Caco-2 (cell line): ENCODE measurements at regions of chr11 and their contacts with region 1.

Region 1: DNA sequence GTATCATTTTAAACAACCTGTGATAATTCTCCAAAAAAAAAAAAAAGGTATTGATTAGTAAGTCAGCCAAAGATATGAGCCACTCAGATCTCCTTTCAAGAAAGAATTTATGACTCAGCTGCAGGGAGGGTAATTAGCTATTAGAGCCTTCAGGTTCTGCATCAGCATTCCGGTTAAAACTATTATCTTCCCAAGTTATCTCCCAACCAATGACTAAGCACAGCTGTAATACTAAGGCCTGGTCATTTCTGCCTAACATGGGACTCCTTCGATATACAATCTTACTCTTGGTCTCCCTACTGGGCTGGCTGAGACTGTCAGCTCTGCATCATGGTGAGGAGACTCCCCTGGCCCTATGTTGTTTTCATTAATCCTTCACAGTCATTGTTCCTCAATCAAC is 60.4 kb downstream of the SBF2 start:
- DNase-seq: peak in 1 of 2 experiments; percentile 28
- H3K4me3 ChIP-seq: no peak overlapping the region
- H3K4me3 Mint-ChIP-seq: no peak overlapping the region
- H3K27ac Mint-ChIP-seq: peak overlapping the region; percentile 24
- H3K4me1 ChIP-seq: peaks cover 20% of the 10 kb centered on the region; the same call in 1 of the 2 replicates
- H3K4me1 Mint-ChIP-seq: peaks cover 6% of the 10 kb centered on the region
- H3K27me3 ChIP-seq: no peaks in the 10 kb centered on the region
- H3K27me3 Mint-ChIP-seq: no peaks in the 10 kb centered on the region
- CTCF ChIP-seq: no peak

Region 2: GRCh38 chr11:10155793-10156490 is 77.6 kb before region 1 on chr11:
- CTCF ChIA-PET with region 1: no interaction called
- POLR2A ChIA-PET with region 1: no interaction called
- intact Hi-C with region 1: loop called (anchors 5 kb)
- DNase-seq: no peak
- H3K4me3 ChIP-seq: no peak overlapping the region
- H3K4me3 Mint-ChIP-seq: no peak overlapping the region
- H3K27ac Mint-ChIP-seq: no peak overlapping the region
- H3K4me1 ChIP-seq: no peaks in the 10 kb centered on the region
- H3K4me1 Mint-ChIP-seq: peaks cover 13% of the 10 kb centered on the region
- H3K27me3 ChIP-seq: no peaks in the 10 kb centered on the region
- H3K27me3 Mint-ChIP-seq: no peaks in the 10 kb centered on the region
- CTCF ChIP-seq: no peak

Region 3: DNA sequence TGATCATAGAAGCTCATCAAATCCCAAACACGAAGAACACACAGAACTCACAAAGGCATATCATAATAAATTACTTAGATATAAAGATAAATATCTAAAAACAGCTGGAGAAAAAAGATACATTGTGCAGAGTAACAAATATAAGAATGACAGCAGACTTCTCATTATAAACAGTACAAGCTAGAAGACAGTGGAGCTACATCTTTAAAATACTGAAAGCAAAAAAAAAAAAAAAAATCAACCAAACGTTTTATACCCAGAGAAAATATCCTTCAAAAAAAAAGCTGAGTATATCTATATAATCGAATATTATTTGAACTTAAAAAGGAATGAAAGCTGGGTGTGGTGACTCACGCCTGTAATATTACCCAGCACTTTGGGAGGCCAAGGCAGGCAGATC is 29.6 kb before region 1 on chr11:
- CTCF ChIA-PET with region 1: no interaction called
- POLR2A ChIA-PET with region 1: no interaction called
- intact Hi-C with region 1: no loop called
- DNase-seq: no peak
- H3K4me3 ChIP-seq: no peak overlapping the region
- H3K4me3 Mint-ChIP-seq: no peak overlapping the region
- H3K27ac Mint-ChIP-seq: no peak overlapping the region
- H3K4me1 ChIP-seq: no peaks in the 10 kb centered on the region; the same call in 1 of the 2 replicates
- H3K4me1 Mint-ChIP-seq: peaks cover 2% of the 10 kb centered on the region
- H3K27me3 ChIP-seq: no peaks in the 10 kb centered on the region
- H3K27me3 Mint-ChIP-seq: no peaks in the 10 kb centered on the region
- CTCF ChIP-seq: no peak

Region 4: DNA sequence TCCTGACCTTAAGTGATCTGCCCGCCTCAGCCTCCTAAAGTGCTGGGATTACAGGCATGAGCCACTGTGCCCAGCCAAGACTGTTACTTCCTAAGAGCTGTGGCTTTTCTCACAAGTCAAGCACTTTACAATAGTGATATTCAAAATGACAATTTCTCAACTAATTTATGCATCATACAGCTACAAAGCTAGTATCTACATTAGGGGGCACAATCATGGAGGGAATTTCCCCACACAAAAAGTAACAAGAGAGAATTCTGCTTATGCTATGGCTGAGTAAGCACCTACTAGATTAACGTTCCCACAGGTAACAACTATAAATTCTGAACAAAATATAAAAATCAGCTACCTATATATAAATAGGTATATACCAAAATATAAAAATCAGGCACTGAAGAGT is 12.2 kb before region 1 on chr11:
- CTCF ChIA-PET with region 1: no interaction called
- POLR2A ChIA-PET with region 1: no interaction called
- intact Hi-C with region 1: no loop called
- DNase-seq: no peak
- H3K4me3 ChIP-seq: no peak overlapping the region
- H3K4me3 Mint-ChIP-seq: no peak overlapping the region
- H3K27ac Mint-ChIP-seq: no peak overlapping the region
- H3K4me1 ChIP-seq: no peaks in the 10 kb centered on the region
- H3K4me1 Mint-ChIP-seq: no peaks in the 10 kb centered on the region
- H3K27me3 ChIP-seq: no peaks in the 10 kb centered on the region
- H3K27me3 Mint-ChIP-seq: no peaks in the 10 kb centered on the region
- CTCF ChIP-seq: no peak

Region 5: GRCh38 chr11:10314199-10315072 is 80.9 kb after region 1 on chr11:
- CTCF ChIA-PET with region 1: no interaction called
- POLR2A ChIA-PET with region 1: no interaction called
- intact Hi-C with region 1: no loop called
- DNase-seq: no peak
- H3K4me3 ChIP-seq: no peak overlapping the region
- H3K4me3 Mint-ChIP-seq: no peak overlapping the region
- H3K27ac Mint-ChIP-seq: no peak overlapping the region
- H3K4me1 ChIP-seq: peaks cover 25% of the 10 kb centered on the region
- H3K4me1 Mint-ChIP-seq: peaks cover 53% of the 10 kb centered on the region
- H3K27me3 ChIP-seq: no peaks in the 10 kb centered on the region
- H3K27me3 Mint-ChIP-seq: no peaks in the 10 kb centered on the region
- CTCF ChIP-seq: no peak

Region 6: GRCh38 chr11:10455637-10456487 is 222.3 kb after region 1 on chr11:
- CTCF ChIA-PET with region 1: no interaction called
- POLR2A ChIA-PET with region 1: no interaction called
- intact Hi-C with region 1: no loop called
- DNase-seq: peak; percentile 48 to 61
- H3K4me3 ChIP-seq: peak overlapping the region; percentile 21
- H3K4me3 Mint-ChIP-seq: peak overlapping the region; percentile 66
- H3K27ac Mint-ChIP-seq: peak overlapping the region; percentile 53
- H3K4me1 ChIP-seq: peaks cover 23% of the 10 kb centered on the region
- H3K4me1 Mint-ChIP-seq: peaks cover 6% of the 10 kb centered on the region
- H3K27me3 ChIP-seq: no peaks in the 10 kb centered on the region
- H3K27me3 Mint-ChIP-seq: no peaks in the 10 kb centered on the region
- CTCF ChIP-seq: no peak